Posterior cingulate gyrus (tissue), 11 donors: ENCODE measurements at regions of chr1 and their contacts with region 1.

Region 1: GRCh38 chr1:25997828-25998761 is at the start of gene PAFAH2:
- DNase-seq: peak; percentile 94 to 99 (median 95)

Region 2: DNA sequence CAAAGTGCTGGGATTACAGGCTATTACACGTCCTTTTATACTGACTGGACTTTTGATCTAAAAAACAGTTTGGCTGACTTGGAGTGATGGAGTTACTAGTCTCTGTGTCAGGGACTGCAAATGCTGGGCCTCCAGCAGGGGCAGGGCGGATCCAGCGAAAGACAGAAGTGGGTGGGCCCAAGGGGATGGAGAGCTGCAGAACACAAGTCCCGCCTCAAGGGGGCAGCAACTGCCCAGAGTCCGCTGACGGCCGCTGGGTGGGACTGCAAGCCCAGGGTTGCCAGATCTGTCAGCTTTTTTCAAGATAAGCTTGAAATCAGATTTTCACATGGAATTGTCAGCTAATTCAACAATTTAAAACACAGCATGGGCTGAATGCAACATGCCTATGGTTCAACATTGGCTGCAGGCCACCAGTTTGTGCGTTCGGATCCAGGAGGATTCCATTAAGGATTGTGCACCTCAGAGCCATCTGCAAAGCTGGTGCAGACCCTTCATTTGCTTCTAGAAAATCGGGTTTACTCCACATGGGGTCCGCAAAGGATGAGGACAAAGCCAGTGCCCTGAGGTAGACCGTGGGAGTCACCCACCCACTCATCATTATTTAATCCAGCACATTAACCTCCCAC is 102.6 kb before region 1 on chr1:
- intact Hi-C with region 1: loop called (anchors 1 kb)
- DNase-seq: peak; percentile 86 to 99 (median 93)

Region 3: GRCh38 chr1:25904943-25905679 is 93.0 kb before region 1 on chr1:
- intact Hi-C with region 1: loop called (anchors 2 kb)
- DNase-seq: peak; percentile 93 to 99 (median 97)